Activated CD4-positive, alpha-beta T cell treated with anti-CD3 and anti-CD28 coated beads for 36 hours (primary cell): ENCODE measurements at regions of chr4 and their contacts with region 1.

Region 1: DNA sequence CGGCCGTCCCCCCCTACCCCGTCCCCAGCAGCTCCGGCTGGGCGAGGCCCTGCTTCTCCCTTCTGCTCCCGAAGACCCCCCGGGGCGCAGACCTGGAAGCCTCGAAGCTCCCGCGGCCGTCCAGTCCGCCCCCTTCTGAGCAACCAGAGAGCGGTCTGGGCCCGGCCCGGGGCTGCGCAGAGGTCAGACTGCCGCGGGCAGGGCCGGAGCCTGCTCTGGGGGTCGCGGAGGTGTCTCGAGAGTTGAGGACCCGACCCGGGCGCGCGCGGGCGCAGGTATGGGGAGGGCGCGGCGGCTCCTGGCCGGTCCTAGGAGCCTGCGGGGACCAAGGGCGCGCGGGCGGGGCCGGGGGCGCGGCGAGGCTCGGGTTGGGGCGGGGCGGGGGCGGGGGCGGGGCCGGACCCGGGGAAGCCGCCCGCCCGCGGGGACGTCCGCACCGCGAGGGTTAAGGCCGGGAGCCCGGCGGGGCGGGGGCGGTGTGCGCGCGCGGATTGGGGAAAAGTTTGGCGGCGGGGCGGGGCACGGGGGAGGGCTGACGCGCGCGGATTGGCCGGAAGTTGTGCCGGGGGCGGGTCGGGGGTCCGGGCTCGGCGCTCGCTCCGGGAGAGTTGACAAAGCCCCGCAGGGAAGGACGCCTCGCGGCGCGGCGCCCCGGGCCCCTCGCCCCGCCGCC is at the start of gene FGFRL1:
- DNase-seq: peak; percentile 97
- ATAC-seq: peak; percentile 59
- H3K4me3 Mint-ChIP-seq: peak within 1 kb of the TSS; percentile 75
- H3K27ac Mint-ChIP-seq: peak within 1 kb of the TSS; percentile 80
- H3K4me1 Mint-ChIP-seq: peaks cover 9% of the 10 kb centered on the region
- H3K27me3 Mint-ChIP-seq: peaks cover 26% of the 10 kb centered on the region
- total RNA-seq, gene FGFRL1: 17.6 to 23.5 TPM

Region 2: DNA sequence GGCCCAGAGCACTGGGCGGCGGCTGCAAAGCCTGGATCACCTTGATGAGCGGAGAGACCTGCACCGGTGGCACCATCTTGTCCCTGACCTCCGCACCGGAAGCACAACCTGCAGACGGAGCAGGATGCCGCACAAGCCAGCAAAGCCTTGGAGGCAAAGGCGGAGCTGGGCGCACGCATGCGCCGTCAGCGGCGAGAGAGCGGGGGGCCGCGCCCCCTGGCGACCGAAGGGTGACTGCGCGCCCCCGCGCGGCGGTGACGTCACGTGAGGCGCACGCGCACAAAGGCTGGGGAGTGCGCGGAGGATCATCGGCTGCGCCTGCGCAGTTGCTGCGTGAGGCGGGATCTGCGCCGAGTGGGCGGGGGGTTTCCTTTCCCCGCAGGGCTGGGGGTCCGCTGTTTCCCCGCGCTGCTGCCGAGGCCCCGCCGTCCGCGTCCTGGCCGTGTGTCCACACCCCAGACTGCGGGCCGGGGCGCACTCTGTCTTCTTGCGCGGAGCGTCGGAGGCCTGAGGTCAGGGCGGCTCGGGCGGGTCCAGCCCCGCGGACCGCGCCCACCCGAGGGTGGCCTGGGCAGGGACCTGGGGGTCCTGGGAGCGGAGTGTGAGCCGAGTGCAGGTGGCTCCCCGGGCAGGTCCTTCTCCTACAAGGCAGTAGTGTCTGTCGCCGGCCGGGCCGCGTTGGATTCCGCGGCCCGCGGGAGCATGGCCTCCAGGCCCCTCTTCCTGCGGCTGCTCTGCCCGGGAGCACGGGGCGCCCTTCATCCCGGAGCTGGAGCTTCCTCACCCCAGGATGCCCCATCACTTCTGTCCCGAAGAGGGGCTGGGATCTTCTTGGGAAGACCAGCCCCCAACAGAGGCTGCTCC is 336.8 kb before region 1 on chr4 and contains the starts of genes ATP5ME and MYL5:
- CTCF ChIA-PET with region 1: no interaction called
- POLR2A ChIA-PET with region 1: no interaction called
- intact Hi-C with region 1: loop called in 1 of 2 experiments (anchors 1 kb)
- DNase-seq: peak; percentile 98
- ATAC-seq: peak; percentile 95
- H3K4me3 Mint-ChIP-seq: peak within 1 kb of the TSS; percentile 80
- H3K27ac Mint-ChIP-seq: peak within 1 kb of the TSS; percentile 84
- H3K4me1 Mint-ChIP-seq: peaks cover 13% of the 10 kb centered on the region
- H3K27me3 Mint-ChIP-seq: no peaks in the 10 kb centered on the region
- total RNA-seq, gene ATP5ME: 147 to 210 TPM
- total RNA-seq, gene MYL5: 13.7 to 16.4 TPM

Region 3: DNA sequence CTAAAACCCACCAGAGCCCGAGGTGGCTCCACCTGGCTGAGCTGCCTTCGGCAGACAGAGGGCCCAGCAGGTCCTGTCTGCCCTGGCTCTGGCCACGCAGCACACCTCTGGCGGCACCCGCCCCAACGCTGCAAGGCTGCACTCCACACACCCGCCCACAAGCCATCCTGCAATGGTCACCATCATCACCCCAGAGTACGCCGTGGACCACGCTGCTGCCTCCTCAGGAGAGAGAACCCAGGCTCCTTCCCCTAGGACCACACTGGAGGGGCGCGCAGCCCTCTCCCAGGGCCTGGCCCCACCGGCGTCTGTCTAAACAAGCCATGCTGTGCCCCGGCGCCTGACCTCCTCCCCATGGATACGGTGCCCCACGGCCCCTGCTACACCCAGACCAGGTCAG is 145.6 kb before region 1 on chr4:
- CTCF ChIA-PET with region 1: no interaction called
- POLR2A ChIA-PET with region 1: no interaction called
- intact Hi-C with region 1: no loop called
- DNase-seq: no peak
- ATAC-seq: no peak
- H3K4me3 Mint-ChIP-seq: no peak overlapping the region
- H3K27ac Mint-ChIP-seq: peak overlapping the region; percentile 14
- H3K4me1 Mint-ChIP-seq: peaks cover 2% of the 10 kb centered on the region
- H3K27me3 Mint-ChIP-seq: no peaks in the 10 kb centered on the region

Region 4: DNA sequence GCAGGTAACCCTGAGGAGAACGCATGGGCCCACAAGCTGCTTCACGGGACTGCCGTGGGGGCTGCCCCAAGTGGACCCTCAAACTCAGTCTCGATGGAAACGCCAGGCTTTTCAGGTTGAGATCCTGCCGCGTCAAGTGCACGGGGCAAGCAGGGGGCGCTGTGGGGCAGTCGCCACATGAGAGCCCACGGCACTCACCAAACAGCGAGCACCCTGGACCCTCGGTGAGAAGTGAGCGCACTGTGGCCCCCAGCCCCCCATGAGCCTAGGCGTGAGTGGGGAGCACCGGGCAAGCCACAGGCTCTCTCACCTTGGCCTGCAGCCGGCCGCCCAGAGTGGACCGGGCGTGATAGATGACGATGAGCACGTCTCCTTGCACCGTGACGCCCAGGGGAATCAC is 134.4 kb before region 1 on chr4:
- CTCF ChIA-PET with region 1: no interaction called
- POLR2A ChIA-PET with region 1: no interaction called
- intact Hi-C with region 1: loop called in 1 of 2 experiments (anchors 1 kb)
- DNase-seq: peak; percentile 30
- ATAC-seq: no peak
- H3K4me3 Mint-ChIP-seq: no peak overlapping the region
- H3K27ac Mint-ChIP-seq: no peak overlapping the region
- H3K4me1 Mint-ChIP-seq: peaks cover 28% of the 10 kb centered on the region
- H3K27me3 Mint-ChIP-seq: no peaks in the 10 kb centered on the region

Region 5: DNA sequence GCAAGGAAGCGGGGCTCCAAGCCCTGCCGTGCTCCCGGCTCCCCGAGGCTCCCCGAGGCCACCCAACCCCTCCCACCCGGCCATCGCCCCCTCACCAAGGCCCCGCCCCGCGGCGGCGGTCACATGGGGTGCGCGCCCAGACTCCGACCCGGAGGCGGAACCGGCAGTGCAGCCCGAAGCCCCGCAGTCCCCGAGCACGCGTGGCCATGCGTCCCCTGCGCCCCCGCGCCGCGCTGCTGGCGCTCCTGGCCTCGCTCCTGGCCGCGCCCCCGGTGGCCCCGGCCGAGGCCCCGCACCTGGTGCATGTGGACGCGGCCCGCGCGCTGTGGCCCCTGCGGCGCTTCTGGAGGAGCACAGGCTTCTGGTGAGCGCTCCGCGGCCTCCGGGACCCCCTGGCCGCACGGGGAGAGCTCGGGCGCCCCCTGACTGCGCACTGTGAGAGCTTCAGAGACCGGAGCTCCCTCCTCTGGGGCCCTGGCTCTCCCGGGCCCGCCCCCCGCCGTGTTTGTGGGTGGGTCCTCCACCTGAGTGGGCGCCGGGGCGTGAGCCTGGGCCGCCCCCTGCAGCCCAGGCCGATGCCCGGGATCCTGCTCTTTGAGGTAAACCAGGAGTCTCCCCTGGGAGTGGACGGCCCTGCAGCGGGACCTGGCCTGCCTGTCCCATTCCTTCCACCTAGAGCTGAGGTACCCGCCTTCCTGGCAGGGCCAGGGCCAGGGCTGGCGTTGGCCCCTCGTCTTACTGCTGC is 24.1 kb before region 1 on chr4 and contains the start of gene IDUA:
- CTCF ChIA-PET with region 1: no interaction called
- POLR2A ChIA-PET with region 1: no interaction called
- intact Hi-C with region 1: loop called in 1 of 2 experiments (anchors 1 kb)
- DNase-seq: peak; percentile 93
- ATAC-seq: peak; percentile 82
- H3K4me3 Mint-ChIP-seq: peak within 1 kb of the TSS; percentile 85
- H3K27ac Mint-ChIP-seq: peak within 1 kb of the TSS; percentile 88
- H3K4me1 Mint-ChIP-seq: peaks cover 13% of the 10 kb centered on the region
- H3K27me3 Mint-ChIP-seq: no peaks in the 10 kb centered on the region
- total RNA-seq, gene IDUA: 6.4 to 9.0 TPM

Region 6: DNA sequence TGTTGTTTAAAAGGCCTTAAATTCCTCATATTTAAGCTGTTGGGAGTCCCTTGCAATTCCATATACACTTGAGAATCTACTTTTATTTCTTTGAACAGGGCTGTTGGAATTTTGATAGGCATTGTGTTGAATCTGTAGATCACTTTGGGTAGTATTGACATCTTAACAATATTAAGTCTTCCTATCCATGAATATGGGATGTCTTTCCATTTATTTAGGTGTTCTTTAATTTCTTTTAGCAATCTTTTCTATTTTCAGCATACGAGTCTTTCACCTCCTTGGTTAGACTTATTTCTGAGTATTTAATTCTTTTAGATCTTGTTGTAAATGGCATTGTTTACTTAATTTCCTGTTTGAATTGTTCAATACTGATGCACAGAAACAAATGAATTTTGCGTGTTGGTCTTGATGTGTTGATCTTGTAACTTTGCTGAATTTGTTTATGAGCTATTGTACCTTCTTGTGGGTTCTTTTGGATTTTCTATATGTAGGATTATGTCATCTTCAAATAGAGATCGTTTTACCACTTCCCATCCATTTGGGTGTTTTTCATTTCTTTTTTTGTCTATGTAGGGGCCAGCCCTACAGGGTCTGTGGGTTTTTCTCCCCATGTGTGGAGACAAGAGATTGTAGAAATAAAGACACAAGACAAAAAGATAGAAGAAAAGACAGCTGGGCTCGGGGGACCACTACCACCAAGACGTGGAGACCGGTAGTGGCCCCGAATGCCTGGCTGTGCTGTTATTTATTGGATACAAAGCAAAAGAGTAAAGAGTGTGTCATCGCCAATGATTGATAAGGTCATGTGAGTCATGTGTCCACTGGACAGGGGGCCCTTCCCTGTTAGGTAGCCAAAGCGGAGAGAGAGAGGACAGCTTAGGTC is 256.0 kb after region 1 on chr4:
- CTCF ChIA-PET with region 1: no interaction called
- POLR2A ChIA-PET with region 1: no interaction called
- intact Hi-C with region 1: loop called in 1 of 2 experiments (anchors 5 kb)
- DNase-seq: peak; percentile 29
- ATAC-seq: peak; percentile 71
- H3K4me3 Mint-ChIP-seq: peak overlapping the region; percentile 63
- H3K27ac Mint-ChIP-seq: peak overlapping the region; percentile 90
- H3K4me1 Mint-ChIP-seq: peaks cover 13% of the 10 kb centered on the region
- H3K27me3 Mint-ChIP-seq: no peaks in the 10 kb centered on the region

Region 7: GRCh38 chr4:2008875-2009703 is 997.9 kb after region 1 on chr4 and contains the start of gene NELFA:
- CTCF ChIA-PET with region 1: no interaction called
- POLR2A ChIA-PET with region 1: no interaction called
- intact Hi-C with region 1: loop called in 1 of 2 experiments (anchors 5 kb)
- DNase-seq: peak; percentile 97
- ATAC-seq: peak; percentile 81
- H3K4me3 Mint-ChIP-seq: peak within 1 kb of the TSS; percentile 87
- H3K27ac Mint-ChIP-seq: peak within 1 kb of the TSS; percentile 90
- H3K4me1 Mint-ChIP-seq: peaks cover 34% of the 10 kb centered on the region
- H3K27me3 Mint-ChIP-seq: no peaks in the 10 kb centered on the region
- total RNA-seq, gene NELFA: 41.6 to 48.3 TPM